ENCODE measurements at regions of chr11 and their contacts with region 1.

Region 1: GRCh38 chr11:3091791-3092602 is 34.8 kb upstream of the CARS1 start:
- DNase-seq: no peak
- H3K4me3 ChIP-seq: no peak overlapping the region
- H3K27ac ChIP-seq: no peak overlapping the region
- H3K27me3 ChIP-seq: no peaks in the 10 kb centered on the region
- CTCF ChIP-seq: peak; percentile 95

Region 2: GRCh38 chr11:3037040-3037944 is 54.7 kb before region 1 on chr11:
- CTCF ChIA-PET with region 1: interaction called, 61 read pairs
- POLR2A ChIA-PET with region 1: interaction called, 3 read pairs
- DNase-seq: peak; percentile 26
- H3K4me3 ChIP-seq: no peak overlapping the region
- H3K27ac ChIP-seq: no peak overlapping the region
- H3K27me3 ChIP-seq: no peaks in the 10 kb centered on the region
- CTCF ChIP-seq: peak; percentile 81

Region 3: DNA sequence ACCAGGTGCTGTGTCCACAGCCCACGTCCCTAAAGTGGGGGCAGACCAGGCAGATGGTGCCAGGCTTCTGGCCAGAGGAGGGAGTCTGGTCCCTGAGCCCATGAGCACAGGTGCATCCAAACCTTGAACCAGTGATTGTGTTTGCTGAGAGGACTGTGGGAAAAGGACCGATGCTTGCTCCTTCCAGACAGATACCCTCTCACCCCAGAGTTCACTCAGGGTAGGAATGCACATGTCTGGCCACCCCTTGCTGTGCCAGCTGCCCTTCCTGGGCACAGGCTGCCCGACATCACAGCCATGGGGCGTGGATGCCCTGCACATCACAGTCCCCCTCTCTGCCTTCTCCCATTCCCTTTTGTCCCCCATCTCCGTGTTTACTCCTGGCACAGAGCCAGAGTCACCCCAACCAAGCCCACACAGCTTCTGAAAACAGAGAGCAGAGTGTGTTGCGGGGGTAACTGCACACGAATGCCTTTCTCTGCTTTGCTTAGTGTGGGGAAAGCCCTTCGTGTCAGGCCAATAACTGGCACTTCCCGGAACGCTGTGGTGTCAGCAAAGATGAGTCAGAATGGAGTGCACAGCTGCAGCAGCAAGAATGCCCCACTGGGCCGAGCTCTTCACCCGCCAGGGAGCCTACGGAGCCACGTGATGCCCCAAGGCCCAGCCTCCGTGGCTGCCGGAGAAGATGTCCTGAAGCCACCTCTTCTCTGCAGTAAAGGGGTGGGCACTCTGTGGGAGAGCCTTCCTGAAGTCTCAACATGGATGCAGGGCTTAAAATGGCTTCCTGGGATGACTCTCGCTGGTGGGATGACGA is 42.4 kb before region 1 on chr11:
- CTCF ChIA-PET with region 1: interaction called, 28 read pairs
- POLR2A ChIA-PET with region 1: interaction called, 7 read pairs
- DNase-seq: peak; percentile 94
- H3K4me3 ChIP-seq: peak overlapping the region; percentile 44
- H3K27ac ChIP-seq: peak overlapping the region; percentile 96
- H3K27me3 ChIP-seq: no peaks in the 10 kb centered on the region
- CTCF ChIP-seq: peak; percentile 43

Region 4: GRCh38 chr11:3080104-3080503 is 11.9 kb before region 1 on chr11:
- CTCF ChIA-PET with region 1: interaction called, 15 read pairs
- POLR2A ChIA-PET with region 1: no interaction called
- DNase-seq: no peak
- H3K4me3 ChIP-seq: no peak overlapping the region
- H3K27ac ChIP-seq: no peak overlapping the region
- H3K27me3 ChIP-seq: peaks cover 3% of the 10 kb centered on the region
- CTCF ChIP-seq: no peak

Measured in AG04450 (cell line).